ENCODE measurements at regions of chrX and their contacts with region 1.

Region 1: DNA sequence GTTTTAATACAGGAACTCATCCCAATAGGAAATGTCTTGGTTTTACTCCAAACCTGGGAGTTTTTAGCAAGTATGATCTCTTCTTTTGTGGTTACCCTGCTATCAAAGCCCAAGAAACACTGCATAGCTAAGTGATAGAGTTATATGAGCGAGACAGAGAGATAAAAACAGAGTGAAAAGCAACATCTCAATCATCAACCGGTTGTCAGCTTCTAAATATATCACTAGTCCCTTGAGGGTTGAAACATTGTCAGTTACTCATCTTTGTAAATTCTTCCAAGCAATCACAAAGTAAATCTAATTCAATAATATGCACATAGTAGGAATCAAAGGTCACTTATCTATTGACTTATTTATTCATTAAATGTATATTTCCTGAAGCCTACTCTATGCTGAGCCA is 483.9 kb downstream of the IDS start:
- DNase-seq: no peak
- H3K4me3 ChIP-seq: no peak overlapping the region
- H3K27ac ChIP-seq: no peak overlapping the region
- H3K4me1 ChIP-seq: no peaks in the 10 kb centered on the region
- H3K27me3 ChIP-seq: no peaks in the 10 kb centered on the region
- CTCF ChIP-seq: no peak

Region 2: DNA sequence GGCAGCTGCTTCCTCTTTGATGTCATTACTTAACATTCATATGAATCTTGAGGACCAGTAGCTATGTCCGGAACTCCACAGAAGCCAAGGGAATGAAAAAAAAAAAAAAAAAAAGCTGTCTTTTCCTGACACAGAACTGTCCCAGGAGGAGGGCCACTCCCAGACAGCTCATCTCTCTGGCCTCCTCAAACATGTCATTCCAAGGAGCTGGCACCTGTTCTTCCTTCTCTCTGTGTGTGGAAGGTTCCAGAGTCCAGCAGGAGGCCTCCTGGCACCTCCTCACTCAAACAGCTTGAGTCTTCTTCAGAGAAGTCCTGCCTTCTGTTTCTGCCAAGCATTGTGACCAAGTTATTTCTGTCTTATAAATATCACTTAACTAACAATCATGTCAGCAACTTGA is 62.3 kb before region 1 on chrX:
- intact Hi-C with region 1: no loop called
- DNase-seq: no peak
- H3K4me3 ChIP-seq: no peak overlapping the region
- H3K27ac ChIP-seq: no peak overlapping the region
- H3K4me1 ChIP-seq: no peaks in the 10 kb centered on the region
- H3K27me3 ChIP-seq: no peaks in the 10 kb centered on the region
- CTCF ChIP-seq: no peak

Region 3: DNA sequence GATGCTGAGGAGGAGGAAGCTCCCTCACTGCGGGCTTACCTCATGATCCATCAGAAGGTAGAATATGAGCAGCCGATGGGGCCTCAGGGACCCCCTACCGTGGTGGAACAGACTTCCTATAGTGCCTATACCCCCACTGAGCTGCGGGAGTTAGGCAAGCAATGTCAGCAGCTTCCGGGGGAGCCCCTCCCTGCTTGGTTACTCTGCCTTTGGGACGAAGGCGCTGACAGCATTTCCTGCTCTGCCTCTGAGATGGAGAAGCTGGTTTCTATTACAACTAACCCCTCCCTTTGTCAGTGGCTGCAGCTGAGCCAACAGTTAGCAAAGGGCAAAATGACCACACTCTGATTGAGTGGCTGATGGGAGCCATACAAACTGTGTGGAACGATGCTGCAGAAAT is 53.2 kb after region 1 on chrX:
- intact Hi-C with region 1: loop called (anchors 10 kb)
- DNase-seq: no peak
- H3K4me3 ChIP-seq: no peak overlapping the region
- H3K27ac ChIP-seq: no peak overlapping the region
- H3K4me1 ChIP-seq: no peaks in the 10 kb centered on the region
- H3K27me3 ChIP-seq: no peaks in the 10 kb centered on the region
- CTCF ChIP-seq: no peak